ENCODE measurements at regions of chr10 and their contacts with region 1.

Region 1: DNA sequence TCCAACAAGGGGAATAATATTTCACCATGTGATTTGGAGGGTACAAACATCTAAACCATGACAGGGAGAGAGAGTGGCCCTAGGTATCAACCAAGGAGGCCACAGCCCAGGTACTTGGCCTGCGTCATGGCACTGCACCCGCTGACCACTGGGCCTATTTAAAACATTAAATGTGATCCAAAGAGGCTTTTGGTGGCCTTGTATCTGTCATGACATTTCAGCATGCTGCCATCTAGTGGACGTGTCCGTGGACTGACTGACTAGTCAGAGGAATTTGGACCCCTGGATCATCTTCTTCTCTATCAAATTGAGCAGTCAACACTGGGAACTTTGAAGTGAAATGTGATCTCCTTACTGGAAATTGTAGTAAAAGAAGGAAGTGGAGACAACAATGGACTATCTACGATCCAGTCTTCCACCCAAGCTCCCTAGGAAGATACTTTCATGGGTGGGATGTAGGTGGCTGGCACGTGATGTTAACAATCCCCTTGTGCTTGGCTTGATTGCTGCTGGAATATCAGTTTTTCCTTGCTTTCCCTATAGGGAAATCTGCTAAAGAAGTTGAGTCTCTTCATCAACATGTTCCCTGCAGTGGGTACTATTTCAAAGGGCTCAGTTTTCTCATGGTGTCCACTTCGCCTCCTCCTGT is 24.6 kb upstream of the ITGA8 start:
- DNase-seq: peak; percentile 39 to 74
- H3K4me3 ChIP-seq: no peak overlapping the region
- H3K4me1 ChIP-seq: no peaks in the 10 kb centered on the region
- H3K27me3 ChIP-seq: no peaks in the 10 kb centered on the region; the same call in 1 of the 2 replicates

Region 2: GRCh38 chr10:15433850-15434537 is 310.3 kb before region 1 on chr10:
- in situ Hi-C with region 1: loop called (anchors 10 kb)
- DNase-seq: peak; percentile 60 to 65
- H3K4me3 ChIP-seq: 0 out of 2 replicates have a peak overlapping the region, but pooled peaks have one; percentile 6
- H3K4me1 ChIP-seq: no peaks in the 10 kb centered on the region
- H3K27me3 ChIP-seq: no peaks in the 10 kb centered on the region